HAP-1 (cell line): ENCODE measurements at regions of chr2 and their contacts with region 1.

Region 1: DNA sequence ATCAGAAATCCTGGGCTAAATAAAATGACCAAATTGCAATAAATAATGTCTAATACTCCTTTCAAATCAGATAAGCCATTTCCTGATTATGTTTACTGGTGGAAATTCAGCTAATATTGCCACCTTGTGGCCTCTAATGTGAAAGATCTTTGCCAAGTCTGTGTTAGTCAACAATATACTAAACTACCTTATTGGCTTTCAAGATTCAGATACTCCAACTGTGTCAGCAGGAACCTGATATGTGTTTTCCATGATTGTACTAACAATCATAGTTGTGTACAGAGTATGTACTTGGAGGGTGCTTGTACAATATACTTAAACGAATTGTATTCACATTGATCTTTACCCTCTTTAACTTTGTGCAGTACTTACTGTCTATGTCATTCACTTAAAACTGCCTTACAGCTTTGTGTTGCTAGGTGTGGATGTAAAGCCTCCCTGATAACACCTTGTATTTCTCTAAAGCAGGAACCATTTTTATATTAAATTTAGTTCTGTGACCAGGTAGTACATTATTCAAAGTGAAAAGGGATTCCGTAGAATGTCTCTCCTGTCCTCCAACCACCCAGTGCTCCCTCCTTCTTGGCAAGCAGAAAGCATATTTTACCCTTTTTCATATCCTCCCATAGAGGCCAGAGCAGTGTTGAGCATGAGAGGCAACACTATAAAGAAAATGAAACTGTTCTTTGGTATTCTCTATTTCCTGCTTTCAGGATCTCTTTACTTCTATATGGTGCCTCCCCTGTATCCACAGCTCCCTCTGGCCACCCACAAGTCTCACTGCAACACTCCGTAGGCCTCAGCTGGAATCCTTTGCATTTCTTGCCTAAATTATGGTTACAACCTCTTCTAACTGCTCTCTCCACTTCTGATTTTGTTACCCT is 75.2 kb upstream of the C2orf15 start:
- DNase-seq: peak in 1 of 2 experiments; percentile 42
- H3K4me3 ChIP-seq: no peak overlapping the region
- H3K4me1 ChIP-seq: no peaks in the 10 kb centered on the region
- H3K27me3 ChIP-seq: no peaks in the 10 kb centered on the region; the same call in 1 of the 2 replicates

Region 2: DNA sequence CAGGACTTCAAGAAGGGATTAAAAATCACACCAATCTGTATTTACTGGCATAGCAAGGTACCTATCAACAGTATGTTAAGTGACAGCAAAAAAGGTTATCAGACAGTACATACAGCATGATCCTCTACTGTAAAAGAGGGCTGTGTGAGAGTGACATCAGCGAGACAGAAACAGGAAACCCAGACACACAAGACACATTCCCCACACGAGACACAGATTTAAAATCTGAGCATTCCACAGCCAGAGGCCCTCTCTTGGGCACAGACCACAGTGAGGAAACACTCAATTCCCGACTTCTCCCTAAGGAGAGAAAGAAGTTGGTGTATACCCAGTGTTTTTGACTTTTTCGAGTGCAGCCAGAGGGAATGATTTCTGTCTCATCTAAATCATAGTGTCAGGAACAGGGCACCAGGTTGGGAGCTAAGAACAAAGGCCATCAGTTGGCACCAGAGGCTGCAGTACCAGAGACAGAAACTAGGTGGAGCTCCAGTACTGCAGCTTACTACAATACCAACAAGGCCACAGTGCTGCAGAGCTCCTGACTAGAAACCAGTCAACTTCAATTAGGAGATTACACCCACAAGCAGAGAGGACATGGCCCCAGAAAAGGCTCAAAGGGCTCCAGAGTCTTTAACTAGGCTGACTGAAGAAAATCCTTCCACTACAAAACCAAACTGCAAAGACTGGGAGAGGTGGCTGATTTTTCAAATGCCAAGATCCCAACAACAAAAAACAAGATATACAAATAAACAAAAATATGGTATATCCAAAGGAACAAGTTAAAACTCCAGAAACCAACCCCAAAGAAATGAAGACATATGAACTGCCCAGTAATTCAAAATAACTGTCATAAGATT is 417.0 kb before region 1 on chr2:
- in situ Hi-C with region 1: loop called (anchors 5 kb)
- DNase-seq: peak; percentile 75 to 82
- H3K4me3 ChIP-seq: no peak overlapping the region
- H3K4me1 ChIP-seq: no peaks in the 10 kb centered on the region
- H3K27me3 ChIP-seq: no peaks in the 10 kb centered on the region

Region 3: DNA sequence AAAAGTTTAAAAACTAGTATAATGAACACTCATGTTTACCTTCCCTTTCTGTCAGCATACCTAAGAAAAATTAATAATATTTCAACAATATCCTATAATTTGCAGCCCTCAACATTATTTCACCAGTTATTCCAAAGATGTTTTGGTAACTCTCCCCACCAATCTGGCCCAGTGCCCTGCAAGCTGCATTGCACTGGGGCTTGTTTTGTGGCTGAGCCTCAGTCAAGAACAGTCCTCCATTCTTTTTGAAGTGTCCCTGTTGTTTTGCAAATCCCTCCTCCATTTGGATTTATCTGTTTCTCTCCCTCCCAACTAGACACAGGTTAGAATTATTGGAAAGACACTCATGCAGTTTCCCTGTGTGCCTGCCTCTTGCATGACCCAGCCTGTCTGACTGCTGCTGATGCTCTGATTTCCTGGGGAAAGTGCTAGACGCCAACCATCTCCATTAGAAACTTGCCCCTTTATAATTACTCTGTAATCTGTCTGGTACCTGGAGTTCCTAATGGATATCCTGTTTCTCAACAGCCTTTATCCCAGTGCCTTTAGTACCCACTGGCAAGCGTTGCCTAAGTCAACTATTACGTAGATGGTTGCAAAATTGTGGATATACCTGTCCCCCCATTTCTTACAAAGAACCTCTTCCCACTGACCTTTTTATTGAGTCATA is 331.1 kb after region 1 on chr2:
- in situ Hi-C with region 1: no loop called
- DNase-seq: no peak
- H3K4me3 ChIP-seq: no peak overlapping the region
- H3K4me1 ChIP-seq: no peaks in the 10 kb centered on the region
- H3K27me3 ChIP-seq: no peaks in the 10 kb centered on the region